ENCODE measurements at regions of chr3 and their contacts with region 1.

Region 1: DNA sequence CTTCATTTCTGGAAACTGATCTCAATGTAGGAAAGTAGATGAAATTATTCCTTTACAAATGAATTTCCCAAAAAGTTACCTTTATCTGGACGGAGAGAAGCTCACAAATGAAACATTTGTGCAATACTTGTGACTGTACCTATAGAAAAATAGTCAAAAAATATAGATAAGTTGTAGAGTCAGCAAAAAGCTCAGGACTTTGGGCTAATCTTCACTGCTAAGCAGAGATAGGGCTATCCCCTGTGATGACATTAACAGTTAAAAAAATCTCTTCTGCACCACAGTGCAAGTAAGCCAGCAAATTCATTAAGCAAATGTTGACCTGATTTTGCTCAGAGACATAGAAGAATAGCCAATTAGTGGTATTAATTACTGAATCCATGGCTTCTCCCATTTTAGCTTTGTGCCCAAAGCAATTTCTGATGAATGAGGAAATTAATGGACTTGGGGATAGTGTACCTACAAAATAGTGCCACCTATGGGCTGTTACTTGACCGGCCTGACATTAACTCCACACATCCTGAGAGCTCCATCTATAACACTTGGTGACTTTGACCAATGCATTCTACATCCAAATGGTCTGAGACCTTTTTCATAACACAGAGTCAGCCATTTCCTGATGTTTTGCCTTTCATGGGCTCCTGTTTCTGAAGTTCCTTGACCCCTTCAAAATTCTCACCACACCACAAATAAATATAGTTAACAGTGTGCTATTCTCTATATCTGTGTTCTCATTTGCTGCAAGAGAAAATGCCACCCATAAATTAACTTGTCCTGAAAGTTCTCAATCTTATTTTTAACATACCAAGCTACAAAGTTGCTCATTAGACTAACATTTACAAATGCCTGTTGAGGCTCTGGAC is 105.0 kb downstream of the SSR3 start:
- DNase-seq: no peak
- ATAC-seq: peak; percentile 86
- H3K4me3 ChIP-seq: no peak overlapping the region
- H3K27ac ChIP-seq: no peak overlapping the region
- H3K4me1 ChIP-seq: no peaks in the 10 kb centered on the region
- H3K27me3 ChIP-seq: no peaks in the 10 kb centered on the region; a peak in 1 of 4 replicates
- CTCF ChIP-seq: peak; percentile 54 to 65 (median 65)
- EP300 ChIP-seq: no peak
- POLR2A ChIP-seq: no peak
- RAD21 ChIP-seq: peak; percentile 41

Region 2: DNA sequence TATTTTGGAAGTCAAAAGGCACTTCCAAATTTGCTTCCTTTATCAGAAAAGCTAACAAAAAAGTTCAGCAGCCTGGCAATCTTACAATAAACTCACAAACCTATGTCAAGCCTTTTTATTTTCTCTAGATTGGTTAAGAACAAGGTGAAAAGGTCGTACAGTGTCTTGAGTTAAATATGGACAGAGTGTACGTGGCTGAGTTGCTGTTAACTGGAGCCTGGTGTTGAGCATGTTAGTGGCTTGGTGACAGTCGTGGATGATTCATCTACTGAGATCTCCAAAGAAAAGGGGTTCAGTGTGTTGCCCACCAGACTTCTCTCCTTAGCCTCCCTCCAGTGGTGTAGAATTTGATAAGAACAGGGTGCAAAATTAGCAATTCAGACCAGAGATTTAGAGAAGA is 15.3 kb after region 1 on chr3:
- CTCF ChIA-PET with region 1: interaction called, 25 read pairs
- POLR2A ChIA-PET with region 1: no interaction called
- RAD21 ChIA-PET with region 1: interaction called, 3 read pairs
- SMC1A ChIA-PET with region 1: interaction called, 5 read pairs
- in situ Hi-C with region 1: no loop called
- intact Hi-C with region 1: no loop called
- DNase-seq: no peak
- ATAC-seq: no peak
- H3K4me3 ChIP-seq: no peak overlapping the region
- H3K27ac ChIP-seq: no peak overlapping the region
- H3K4me1 ChIP-seq: peaks cover 4% of the 10 kb centered on the region; the same call in 1 of the 2 replicates
- H3K27me3 ChIP-seq: no peaks in the 10 kb centered on the region; a peak in 1 of 4 replicates
- CTCF ChIP-seq: no peak
- EP300 ChIP-seq: no peak
- POLR2A ChIP-seq: no peak
- RAD21 ChIP-seq: no peak

Region 3: DNA sequence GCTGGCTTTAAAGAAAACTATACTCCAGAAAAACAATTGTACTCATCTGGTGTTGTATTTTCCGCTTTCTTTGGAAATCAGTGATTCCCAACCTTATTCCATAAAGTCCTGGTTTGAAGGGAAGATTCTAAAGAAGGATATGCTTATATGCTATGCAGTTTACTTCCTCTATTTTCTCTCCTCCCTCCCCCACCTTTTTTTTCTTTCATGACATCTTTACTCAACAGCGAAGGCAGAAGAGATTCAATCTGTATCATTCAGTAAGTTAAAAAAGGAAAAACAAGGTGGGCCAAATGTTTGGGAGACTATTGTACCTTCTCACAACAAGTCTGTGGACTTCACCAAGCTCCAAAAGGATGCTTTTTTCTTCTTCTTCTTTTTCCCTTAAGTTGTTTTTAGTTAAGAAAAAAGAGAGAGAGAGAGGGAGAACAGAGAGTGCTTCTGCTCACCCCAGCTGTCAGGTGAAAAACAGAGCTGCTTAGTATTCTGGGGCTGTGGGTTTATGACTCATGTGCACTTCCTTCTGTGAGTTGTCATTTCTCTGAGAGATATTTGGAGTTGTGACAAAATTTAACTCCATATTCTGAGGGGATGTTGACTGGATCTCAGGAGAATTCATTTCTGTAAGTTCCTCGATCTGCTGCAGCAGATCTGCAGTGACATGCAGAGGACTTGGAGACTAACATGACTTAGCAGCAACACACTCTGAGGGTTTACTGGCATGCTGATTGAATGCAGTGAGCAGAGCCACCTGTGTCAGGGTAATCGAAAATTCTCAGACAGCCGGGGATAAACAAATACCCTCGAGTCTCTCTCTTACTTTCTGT is 34.2 kb after region 1 on chr3:
- CTCF ChIA-PET with region 1: interaction called, 18 read pairs
- POLR2A ChIA-PET with region 1: no interaction called
- RAD21 ChIA-PET with region 1: interaction called, 10 read pairs
- SMC1A ChIA-PET with region 1: interaction called, 4 read pairs
- in situ Hi-C with region 1: no loop called
- intact Hi-C with region 1: no loop called
- DNase-seq: peak; percentile 77
- ATAC-seq: peak; percentile 92
- H3K4me3 ChIP-seq: peak overlapping the region; percentile 67
- H3K27ac ChIP-seq: peak overlapping the region; percentile 89
- H3K4me1 ChIP-seq: peaks cover 15% of the 10 kb centered on the region
- H3K27me3 ChIP-seq: no peaks in the 10 kb centered on the region
- CTCF ChIP-seq: no peak
- EP300 ChIP-seq: peak in 1 of 2 experiments; percentile 38; a peak in 3 of 4 replicates
- POLR2A ChIP-seq: no peak
- RAD21 ChIP-seq: no peak

Measured in GM12878 (cell line).